H1 (cell line): ENCODE measurements at regions of chr3 and their contacts with region 1.

Region 1: GRCh38 chr3:150787741-150788370 is 24.9 kb upstream of the SIAH2 start:
- DNase-seq: peak in 1 of 2 experiments; percentile 93
- H3K4me3 ChIP-seq: no peak overlapping the region
- H3K27ac ChIP-seq: no peak overlapping the region
- H3K4me1 ChIP-seq: no peaks in the 10 kb centered on the region
- H3K27me3 ChIP-seq: no peaks in the 10 kb centered on the region; a peak in 1 of 7 replicates
- CTCF ChIP-seq: peak; percentile 95 to 96 (median 96)
- EP300 ChIP-seq: no peak
- POLR2A ChIP-seq: no peak
- RAD21 ChIP-seq: peak; percentile 98 to 99

Region 2: GRCh38 chr3:150775091-150775501 is 12.8 kb before region 1 on chr3:
- CTCF ChIA-PET with region 1: interaction called, 71 read pairs
- POLR2A ChIA-PET with region 1: no interaction called
- DNase-seq: no peak
- H3K4me3 ChIP-seq: no peak overlapping the region
- H3K27ac ChIP-seq: no peak overlapping the region
- H3K4me1 ChIP-seq: no peaks in the 10 kb centered on the region
- H3K27me3 ChIP-seq: no peaks in the 10 kb centered on the region
- CTCF ChIP-seq: no peak
- EP300 ChIP-seq: no peak
- POLR2A ChIP-seq: no peak
- RAD21 ChIP-seq: no peak

Region 3: DNA sequence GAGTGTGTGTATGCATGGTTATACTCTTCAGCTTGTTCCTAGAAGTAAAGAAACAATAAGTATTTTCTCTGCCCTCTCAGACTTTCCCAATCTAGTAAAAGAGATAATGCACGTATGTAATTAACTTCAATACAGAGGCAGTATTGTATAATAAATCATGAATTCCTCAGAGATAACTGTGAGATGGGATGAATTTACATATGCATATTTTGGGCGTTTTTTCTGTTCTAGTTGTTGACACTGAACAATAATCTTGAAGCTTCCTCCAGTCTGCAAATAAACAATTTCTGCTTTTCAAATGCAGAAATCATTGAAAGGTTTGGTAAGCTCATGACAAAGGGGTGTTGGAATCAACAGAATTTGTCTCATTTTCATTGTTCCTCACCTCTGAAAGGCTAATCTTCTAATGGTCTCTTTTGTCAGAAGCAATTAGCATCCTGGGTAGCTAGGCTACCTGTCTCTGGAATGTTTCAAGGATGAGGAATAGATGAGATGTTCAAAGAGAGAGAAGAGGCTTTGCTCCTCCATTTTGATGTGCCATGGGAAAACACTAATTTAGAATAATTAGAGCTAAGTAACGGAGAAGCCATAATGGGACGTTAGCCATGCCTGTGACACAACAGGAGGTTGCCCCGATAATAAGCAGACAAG is 18.5 kb after region 1 on chr3:
- CTCF ChIA-PET with region 1: interaction called, 25 read pairs
- POLR2A ChIA-PET with region 1: interaction called, 5 read pairs
- DNase-seq: peak in 1 of 2 experiments; percentile 50
- H3K4me3 ChIP-seq: peak overlapping the region in 1 of 4 experiments; percentile 26; a peak in 1 of 8 replicates
- H3K27ac ChIP-seq: no peak overlapping the region
- H3K4me1 ChIP-seq: peaks cover 0 to 17% (median 10%) of the 10 kb centered on the region in 4 experiments; a peak in 4 of 7 replicates
- H3K27me3 ChIP-seq: no peaks in the 10 kb centered on the region; a peak in 1 of 7 replicates
- CTCF ChIP-seq: no peak
- EP300 ChIP-seq: peak in 1 of 2 experiments; percentile 87; a peak in 1 of 3 replicates
- POLR2A ChIP-seq: no peak
- RAD21 ChIP-seq: no peak

Region 4: GRCh38 chr3:150840802-150841515 is 53.1 kb after region 1 on chr3:
- CTCF ChIA-PET with region 1: interaction called, 12 read pairs
- POLR2A ChIA-PET with region 1: no interaction called
- DNase-seq: no peak
- H3K4me3 ChIP-seq: no peak overlapping the region
- H3K27ac ChIP-seq: no peak overlapping the region
- H3K4me1 ChIP-seq: peaks cover 0 to 3% (median 1%) of the 10 kb centered on the region in 4 experiments; a peak in 2 of 7 replicates
- H3K27me3 ChIP-seq: peaks cover 5 to 17% (median 14%) of the 10 kb centered on the region in 4 experiments; a peak in 6 of 7 replicates
- CTCF ChIP-seq: peak; percentile 21 to 58 (median 37)
- EP300 ChIP-seq: no peak
- POLR2A ChIP-seq: no peak
- RAD21 ChIP-seq: peak; percentile 23 to 41; a peak in 3 of 4 replicates

Region 5: GRCh38 chr3:150861851-150862250 is 74.0 kb after region 1 on chr3:
- CTCF ChIA-PET with region 1: interaction called, 97 read pairs
- POLR2A ChIA-PET with region 1: interaction called, 3 read pairs
- DNase-seq: no peak
- H3K4me3 ChIP-seq: no peak overlapping the region
- H3K27ac ChIP-seq: no peak overlapping the region
- H3K4me1 ChIP-seq: no peaks in the 10 kb centered on the region
- H3K27me3 ChIP-seq: no peaks in the 10 kb centered on the region
- CTCF ChIP-seq: no peak
- EP300 ChIP-seq: no peak
- POLR2A ChIP-seq: no peak
- RAD21 ChIP-seq: no peak